ENCODE measurements at regions of chr16 and their contacts with region 1.

Region 1: DNA sequence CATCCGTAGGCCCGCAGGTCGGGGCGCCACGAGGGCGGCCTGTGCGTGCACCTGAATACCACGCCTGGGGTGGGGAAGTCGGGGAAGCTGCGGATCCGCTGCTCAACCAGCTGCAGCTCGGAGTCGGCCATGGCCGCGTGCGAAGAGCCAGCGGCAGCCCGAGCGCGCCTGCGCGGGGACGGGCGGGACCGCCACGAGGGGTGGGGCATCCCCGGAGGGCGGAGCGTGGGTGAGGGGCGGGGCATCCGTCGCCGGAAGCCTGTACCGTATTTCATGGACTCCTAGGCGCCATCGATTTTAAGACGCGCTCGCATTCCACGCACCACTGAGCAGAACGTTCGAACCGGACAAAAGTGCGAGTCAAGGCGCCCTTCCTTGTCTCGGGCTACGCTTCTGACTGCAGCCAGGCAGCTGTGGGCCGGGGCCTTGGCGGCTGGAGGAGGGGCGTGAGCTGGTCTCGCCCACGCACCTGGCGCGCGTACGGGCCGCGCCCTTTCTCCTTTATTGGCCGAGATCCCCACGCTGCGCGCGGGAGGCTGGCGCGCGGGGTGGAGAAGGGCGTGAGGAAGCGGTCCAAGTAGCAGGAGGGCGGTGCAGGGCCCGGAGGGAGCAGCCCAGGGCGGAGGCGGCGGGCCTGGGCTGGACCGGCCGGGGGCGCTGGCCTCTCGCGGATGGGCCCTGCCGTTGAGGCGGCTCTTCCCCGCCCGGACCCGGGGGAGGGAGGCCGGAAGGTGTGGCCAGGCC is at the start of gene APRT:
- DNase-seq: peak; percentile 87 to 94 (median 93)
- H3K4me3 ChIP-seq: peak within 1 kb of the TSS; percentile 50 to 85 (median 77)
- H3K27ac ChIP-seq: peak within 1 kb of the TSS; percentile 53 to 81
- H3K4me1 ChIP-seq: peaks cover 0 to 42% (median 35%) of the 10 kb centered on the region in 4 experiments
- H3K27me3 ChIP-seq: no peaks in the 10 kb centered on the region

Region 2: GRCh38 chr16:88799569-88800276 is 12.2 kb before region 1 on chr16:
- CTCF ChIA-PET with region 1: interaction called, 10 read pairs
- POLR2A ChIA-PET with region 1: interaction called, 6 read pairs
- DNase-seq: peak; percentile 94 to 100 (median 99)
- H3K4me3 ChIP-seq: peak overlapping the region in 4 of 7 experiments; percentile 28 to 40 (median 35)
- H3K27ac ChIP-seq: peak overlapping the region; percentile 71 to 78
- H3K4me1 ChIP-seq: peaks cover 13 to 76% (median 60%) of the 10 kb centered on the region in 4 experiments
- H3K27me3 ChIP-seq: no peaks in the 10 kb centered on the region

Region 3: GRCh38 chr16:88830258-88830657 is 18.3 kb after region 1 on chr16:
- CTCF ChIA-PET with region 1: no interaction called
- POLR2A ChIA-PET with region 1: no interaction called
- DNase-seq: no peak
- H3K4me3 ChIP-seq: no peak overlapping the region
- H3K27ac ChIP-seq: no peak overlapping the region
- H3K4me1 ChIP-seq: no peaks in the 10 kb centered on the region
- H3K27me3 ChIP-seq: no peaks in the 10 kb centered on the region

Region 4: DNA sequence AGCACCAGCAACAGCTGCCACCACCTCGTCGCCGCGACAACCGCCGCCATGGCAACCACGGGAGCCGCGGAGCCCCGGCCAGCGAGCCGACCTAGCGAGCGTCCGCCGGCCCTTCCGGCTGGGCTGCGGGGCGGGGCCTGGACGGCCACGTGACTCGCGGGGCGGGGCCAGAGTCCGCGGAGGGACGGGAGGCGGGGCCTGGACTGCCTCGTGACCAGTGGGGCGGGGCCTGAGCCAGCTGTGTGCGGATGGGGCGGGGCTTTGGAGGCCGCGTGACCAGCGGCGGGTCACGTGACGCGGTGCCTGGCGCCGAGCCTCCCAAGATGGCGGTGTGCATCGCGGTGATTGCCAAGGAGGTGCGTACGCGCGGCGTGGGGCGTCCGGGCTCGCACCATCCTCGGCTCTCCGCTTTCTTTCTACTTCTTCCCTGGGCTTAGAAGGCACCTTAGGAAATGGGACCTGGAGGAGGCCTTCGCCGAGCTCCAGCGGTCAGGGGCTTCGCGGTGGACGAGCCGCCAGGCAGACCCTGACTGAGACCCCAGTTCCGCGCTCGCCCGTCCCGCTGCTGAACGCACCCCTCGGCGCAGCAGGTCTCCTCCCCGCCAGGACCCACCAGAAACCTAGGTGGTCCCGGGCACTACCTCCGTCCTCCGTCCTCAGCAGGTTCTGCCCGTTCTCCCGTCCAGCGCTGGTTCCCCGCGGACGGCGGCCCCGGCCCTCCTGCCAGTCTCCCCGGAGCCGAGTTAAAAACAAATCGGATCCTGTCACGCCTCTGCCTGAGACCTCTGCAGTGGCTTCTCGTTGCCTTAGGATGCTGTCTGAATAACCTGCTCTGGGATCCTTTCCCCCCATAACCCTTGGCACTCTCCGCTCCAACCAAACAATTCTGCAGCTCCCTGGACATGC is 45.1 kb after region 1 on chr16 and contains the starts of genes GALNS and TRAPPC2L:
- CTCF ChIA-PET with region 1: interaction called, 39 read pairs
- POLR2A ChIA-PET with region 1: no interaction called
- DNase-seq: peak; percentile 89 to 95 (median 94)
- H3K4me3 ChIP-seq: peak within 1 kb of the TSS; percentile 83 to 98 (median 93)
- H3K27ac ChIP-seq: peak within 1 kb of the TSS in 1 of 2 experiments; percentile 61
- H3K4me1 ChIP-seq: peaks cover 3 to 43% (median 33%) of the 10 kb centered on the region in 4 experiments
- H3K27me3 ChIP-seq: no peaks in the 10 kb centered on the region

Region 5: DNA sequence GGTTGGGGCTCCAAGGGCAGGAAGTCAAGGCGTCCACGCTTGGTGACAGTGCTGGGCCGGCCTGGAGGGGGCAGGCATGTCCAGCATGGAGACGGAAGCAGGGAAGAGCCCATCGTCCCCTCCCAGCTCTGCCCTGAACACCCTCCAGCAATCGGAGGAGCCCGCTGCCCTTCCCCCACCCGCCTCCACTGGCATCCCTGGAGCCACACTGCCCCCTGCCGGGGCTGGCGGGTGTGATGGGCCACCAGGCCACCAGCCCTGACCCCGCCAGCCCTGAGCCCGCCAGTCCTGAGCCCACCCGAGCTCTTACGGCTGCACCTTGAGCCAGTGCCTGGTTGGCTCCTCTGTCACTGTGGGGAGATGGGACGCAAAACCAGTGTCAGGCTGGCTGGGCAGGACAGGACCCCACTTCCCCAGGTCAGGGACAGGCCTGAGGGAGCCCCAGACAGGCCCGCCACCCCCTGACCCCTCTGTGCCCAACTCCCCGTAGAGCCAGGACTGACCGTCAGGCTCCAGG is 355.5 kb after region 1 on chr16:
- CTCF ChIA-PET with region 1: interaction called, 12 read pairs
- POLR2A ChIA-PET with region 1: no interaction called
- DNase-seq: peak; percentile 72 to 84 (median 77)
- H3K4me3 ChIP-seq: peak overlapping the region in 2 of 7 experiments; percentile 5 to 61
- H3K27ac ChIP-seq: no peak overlapping the region
- H3K4me1 ChIP-seq: peaks cover 0 to 23% (median 20%) of the 10 kb centered on the region in 4 experiments
- H3K27me3 ChIP-seq: peaks cover 0 to 18% (median 5%) of the 10 kb centered on the region in 5 experiments

Measured in common myeloid progenitor, CD34-positive (primary cell).